Cardiac septum (tissue), 1 donor: ENCODE measurements at regions of chr13 and their contacts with region 1.

Region 1: GRCh38 chr13:101098873-101099272 is 317.4 kb downstream of the NALCN start:
- DNase-seq: no peak

Region 2: DNA sequence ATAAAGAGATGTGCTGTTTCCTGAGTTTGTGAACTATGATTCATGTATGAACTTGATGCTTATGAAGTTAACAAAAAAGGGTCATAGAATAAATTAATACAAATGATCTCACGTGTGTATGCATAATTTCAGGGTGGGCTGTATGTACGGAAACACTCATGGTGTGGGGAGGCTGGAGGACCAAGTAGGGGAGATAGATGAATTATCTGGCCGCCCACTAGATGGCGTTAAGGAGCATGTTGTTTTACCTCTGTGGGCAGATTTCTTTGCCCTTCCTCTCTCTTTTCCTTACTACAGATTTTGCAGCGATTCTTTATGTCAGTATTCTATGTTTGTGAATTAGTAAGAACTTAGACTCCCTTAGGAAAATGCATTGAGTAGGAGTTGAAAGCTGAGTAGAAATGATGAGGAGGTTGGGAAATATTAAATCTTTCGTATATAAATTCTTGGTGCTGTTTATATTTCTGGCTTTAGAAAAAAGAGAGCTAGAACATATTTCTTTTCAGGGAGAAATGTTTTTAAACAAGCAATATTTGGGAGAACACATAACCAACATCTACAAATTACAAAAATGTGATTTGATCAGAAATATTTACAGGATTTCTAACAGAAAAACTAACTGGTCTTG is 376.9 kb before region 1 on chr13:
- intact Hi-C with region 1: loop called (anchors 5 kb)
- DNase-seq: no peak

Region 3: GRCh38 chr13:101082481-101082880 is 16.4 kb before region 1 on chr13:
- intact Hi-C with region 1: no loop called
- DNase-seq: no peak